Naive thymus-derived CD4-positive, alpha-beta T cell (primary cell): ENCODE measurements at regions of chr14 and their contacts with region 1.

Region 1: DNA sequence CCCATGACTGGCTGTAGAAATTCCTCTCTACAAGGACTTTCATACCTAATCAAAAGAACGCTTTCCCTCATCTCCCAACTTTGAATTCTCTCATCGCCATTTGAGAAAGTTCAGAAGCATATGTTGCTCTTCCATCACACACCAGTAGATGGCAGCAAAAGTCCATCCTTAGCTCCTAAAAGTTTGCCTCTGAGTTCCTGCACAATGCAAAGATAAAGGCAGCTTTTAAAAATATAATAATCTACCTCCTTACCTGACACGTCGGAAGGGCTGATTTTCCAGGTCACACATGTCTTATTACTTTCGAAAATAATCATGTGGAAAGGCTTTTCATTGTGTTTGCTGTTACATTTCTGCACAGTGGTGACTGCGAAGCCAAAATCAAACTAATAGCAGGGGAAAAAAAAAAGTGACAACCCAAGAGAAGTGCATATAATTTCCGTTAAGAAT is 456.7 kb upstream of the SEL1L start:
- DNase-seq: peak in 6 of 9 donors; percentile 9 to 28 (median 17)
- ATAC-seq: peak; percentile 48
- H3K4me3 ChIP-seq: no peak overlapping the region
- H3K4me3 Mint-ChIP-seq: no peak overlapping the region
- H3K27ac ChIP-seq: no peak overlapping the region
- H3K27ac Mint-ChIP-seq: no peak overlapping the region
- H3K4me1 ChIP-seq: no peaks in the 10 kb centered on the region
- H3K4me1 Mint-ChIP-seq: no peaks in the 10 kb centered on the region
- H3K27me3 ChIP-seq: no peaks in the 10 kb centered on the region
- H3K27me3 Mint-ChIP-seq: peaks cover 0 to 12% (median 3%) of the 10 kb centered on the region in 5 donors

Region 2: DNA sequence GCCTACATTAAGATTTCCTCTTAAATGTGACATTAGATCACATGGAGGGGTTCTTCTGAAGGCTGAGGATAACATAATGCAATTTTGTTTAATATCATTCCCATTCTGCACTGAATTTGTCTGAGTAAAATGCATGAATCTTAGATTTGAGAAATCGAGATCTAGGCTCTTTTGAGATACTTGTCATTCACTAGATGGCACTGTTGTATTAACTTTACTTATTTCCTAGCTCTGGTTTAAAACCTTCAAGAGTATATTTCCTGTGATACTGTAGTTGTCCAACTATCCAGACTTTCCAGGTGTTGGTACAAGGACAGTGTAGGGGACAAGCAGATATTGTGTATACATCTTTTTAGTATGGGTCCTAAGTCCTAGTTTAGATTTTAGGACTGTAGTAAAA is 365.0 kb before region 1 on chr14:
- CTCF ChIA-PET with region 1: no interaction called
- POLR2A ChIA-PET with region 1: no interaction called
- intact Hi-C with region 1: loop called in 1 of 2 experiments (anchors 2 kb)
- DNase-seq: peak in 1 of 9 donors; percentile 2
- ATAC-seq: no peak
- H3K4me3 ChIP-seq: no peak overlapping the region
- H3K4me3 Mint-ChIP-seq: no peak overlapping the region
- H3K27ac ChIP-seq: no peak overlapping the region
- H3K27ac Mint-ChIP-seq: no peak overlapping the region
- H3K4me1 ChIP-seq: no peaks in the 10 kb centered on the region
- H3K4me1 Mint-ChIP-seq: no peaks in the 10 kb centered on the region
- H3K27me3 ChIP-seq: no peaks in the 10 kb centered on the region
- H3K27me3 Mint-ChIP-seq: peaks cover 0 to 16% (median 14%) of the 10 kb centered on the region in 5 donors

Region 3: DNA sequence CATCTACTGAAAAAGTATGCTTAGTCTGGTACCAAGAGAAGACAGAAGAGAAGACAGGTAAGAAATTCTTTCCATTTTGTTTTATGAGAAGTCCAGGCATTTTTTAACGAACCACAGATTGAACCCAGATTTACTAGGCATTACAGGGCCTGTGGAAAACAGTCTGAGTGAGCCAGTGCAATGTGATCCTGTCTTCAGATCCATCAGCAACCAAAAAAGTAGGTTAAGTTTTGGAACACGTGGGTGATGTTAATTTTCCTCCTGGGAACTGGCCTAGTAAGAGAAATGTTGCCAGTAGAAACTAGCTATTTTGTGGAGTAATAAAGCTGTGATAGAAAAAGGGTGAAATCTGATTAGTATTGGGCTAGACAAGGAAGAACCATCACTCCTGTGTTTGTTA is 15.8 kb before region 1 on chr14:
- CTCF ChIA-PET with region 1: no interaction called
- POLR2A ChIA-PET with region 1: no interaction called
- intact Hi-C with region 1: no loop called
- DNase-seq: no peak
- ATAC-seq: no peak
- H3K4me3 ChIP-seq: no peak overlapping the region
- H3K4me3 Mint-ChIP-seq: no peak overlapping the region
- H3K27ac ChIP-seq: no peak overlapping the region
- H3K27ac Mint-ChIP-seq: no peak overlapping the region
- H3K4me1 ChIP-seq: no peaks in the 10 kb centered on the region
- H3K4me1 Mint-ChIP-seq: no peaks in the 10 kb centered on the region
- H3K27me3 ChIP-seq: no peaks in the 10 kb centered on the region
- H3K27me3 Mint-ChIP-seq: no peaks in the 10 kb centered on the region

Region 4: DNA sequence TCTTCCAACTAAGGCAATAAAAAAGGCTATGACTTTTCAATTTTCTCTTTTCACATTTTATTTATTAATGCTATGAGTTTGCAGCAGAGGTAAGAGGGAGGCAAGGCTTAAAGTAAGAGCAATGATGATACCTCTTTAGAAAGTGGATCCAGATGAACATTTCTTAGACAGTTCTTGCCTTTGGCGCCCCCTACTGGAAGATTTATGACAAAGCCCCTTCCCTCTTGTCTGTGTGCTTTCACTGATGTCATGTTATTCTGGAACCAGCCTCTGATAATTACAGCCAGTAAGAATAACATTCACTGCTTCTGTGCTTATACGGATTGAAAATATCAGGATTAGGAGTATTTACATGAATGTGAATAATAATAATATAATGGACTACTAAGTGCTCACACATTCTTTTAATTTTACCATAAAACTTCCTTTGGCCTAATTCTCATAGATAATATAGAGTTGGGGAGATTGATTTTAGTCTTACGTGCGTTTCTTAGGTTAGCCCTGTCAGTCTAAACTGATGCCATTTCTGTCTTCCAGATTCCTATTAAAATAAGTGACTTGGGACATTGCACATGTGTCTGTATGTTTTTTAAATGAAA is 1473.3 kb after region 1 on chr14:
- CTCF ChIA-PET with region 1: no interaction called
- POLR2A ChIA-PET with region 1: no interaction called
- intact Hi-C with region 1: loop called in 1 of 2 experiments (anchors 5 kb)
- DNase-seq: no peak
- ATAC-seq: no peak
- H3K4me3 ChIP-seq: no peak overlapping the region
- H3K4me3 Mint-ChIP-seq: no peak overlapping the region
- H3K27ac ChIP-seq: no peak overlapping the region
- H3K27ac Mint-ChIP-seq: no peak overlapping the region
- H3K4me1 ChIP-seq: no peaks in the 10 kb centered on the region
- H3K4me1 Mint-ChIP-seq: no peaks in the 10 kb centered on the region
- H3K27me3 ChIP-seq: no peaks in the 10 kb centered on the region
- H3K27me3 Mint-ChIP-seq: no peaks in the 10 kb centered on the region